ENCODE measurements at regions of chr11 and their contacts with region 1.

Region 1: DNA sequence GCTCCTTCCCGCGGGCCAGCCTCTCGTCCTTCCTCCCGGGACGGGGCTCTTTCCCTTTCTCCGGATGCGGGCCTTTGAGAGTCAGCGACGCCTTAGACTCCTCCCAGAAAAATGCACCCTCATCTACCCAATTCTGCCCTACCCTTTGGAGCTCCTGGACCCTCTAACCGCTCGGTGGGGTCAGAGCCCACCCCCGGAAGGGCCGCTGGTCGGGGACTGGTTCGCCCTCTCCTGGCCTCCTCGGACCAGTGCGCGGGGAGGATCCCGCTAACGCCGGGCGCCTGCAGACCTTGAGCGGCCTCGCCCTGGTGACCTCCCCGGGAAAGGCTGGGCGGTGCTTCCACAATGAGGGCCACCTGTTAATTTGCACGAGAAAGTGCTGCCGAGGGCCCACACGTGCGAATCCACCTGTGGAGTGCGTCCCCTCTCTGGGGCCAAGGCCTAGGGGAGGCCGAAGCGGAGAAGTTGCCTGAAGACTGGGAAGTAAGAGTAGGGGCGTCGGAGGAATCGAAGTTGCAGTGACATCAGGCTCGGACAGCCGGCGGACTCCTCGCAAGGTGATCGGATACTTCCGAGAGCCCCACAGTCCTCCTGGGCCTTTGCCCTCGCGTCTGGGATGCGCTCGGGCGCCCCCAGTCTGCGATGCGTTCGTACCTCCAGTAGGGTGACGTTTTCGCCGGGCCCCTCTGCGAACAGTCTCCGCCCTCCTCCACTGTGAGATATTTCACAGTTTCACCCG is 61.5 kb downstream of the ENDOD1 start:
- DNase-seq: peak; percentile 90
- H3K4me3 ChIP-seq: peak overlapping the region; percentile 46 to 52 (median 50)
- H3K27ac ChIP-seq: peak overlapping the region; percentile 89
- H3K4me1 ChIP-seq: peaks cover 64% of the 10 kb centered on the region
- H3K27me3 ChIP-seq: no peaks in the 10 kb centered on the region
- CTCF ChIP-seq: peak; percentile 78 to 84

Region 2: DNA sequence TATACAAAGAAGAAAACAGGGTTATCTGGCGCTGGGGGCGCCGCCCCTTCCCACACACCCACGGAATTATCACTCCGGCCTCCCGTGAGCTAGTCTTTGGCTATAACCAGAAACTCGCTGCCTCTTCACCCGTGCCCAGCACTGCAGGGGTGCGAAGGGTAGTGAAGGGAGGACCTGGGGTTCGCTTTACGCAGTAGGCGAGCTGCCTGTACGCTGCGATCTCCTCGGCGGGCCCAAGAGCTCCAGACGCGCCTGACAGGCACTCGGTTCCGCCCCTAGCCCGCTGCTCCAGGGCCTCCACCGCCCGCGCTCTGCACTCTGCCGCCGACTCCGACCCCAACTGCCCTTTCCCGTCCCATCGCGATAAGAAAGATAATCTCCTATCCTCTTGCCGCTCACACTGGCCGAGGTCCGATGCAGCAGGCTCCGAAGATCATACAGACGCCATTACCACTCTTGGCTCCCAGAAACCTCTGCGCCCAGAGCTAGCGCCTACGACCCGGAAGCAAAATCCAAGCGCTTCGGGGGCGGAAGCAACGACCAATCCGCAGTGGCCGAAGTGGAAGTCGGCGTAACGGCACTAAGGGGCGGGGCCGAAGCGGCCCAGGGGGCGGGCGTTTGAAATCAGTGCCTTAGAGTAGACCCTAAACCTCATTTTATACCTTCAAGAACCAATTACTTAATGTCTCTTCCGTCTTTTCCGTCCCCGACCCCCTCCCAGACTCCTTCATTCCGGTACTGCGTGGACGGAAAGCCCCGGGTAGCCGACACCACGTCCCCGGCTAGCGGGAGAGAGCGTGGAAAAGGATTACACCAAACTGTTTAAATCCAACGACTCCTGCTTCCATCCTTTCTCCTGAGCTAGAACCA is 177.8 kb before region 1 on chr11 and contains the starts of genes CWC15 and KDM4D:
- CTCF ChIA-PET with region 1: no interaction called
- dilution Hi-C with region 1: no loop called
- in situ Hi-C with region 1: no loop called
- intact Hi-C with region 1: loop called (anchors 2 kb)
- DNase-seq: peak; percentile 90
- H3K4me3 ChIP-seq: peak within 1 kb of the TSS; percentile 86 to 99 (median 89)
- H3K27ac ChIP-seq: peak within 1 kb of the TSS; percentile 80
- H3K4me1 ChIP-seq: peaks cover 9% of the 10 kb centered on the region
- H3K27me3 ChIP-seq: no peaks in the 10 kb centered on the region
- CTCF ChIP-seq: no peak
- total RNA-seq, gene CWC15: 27.5 to 46.5 TPM
- total RNA-seq, gene KDM4D: 1.0 TPM

Region 3: GRCh38 chr11:95089620-95090542 is 61.2 kb before region 1 on chr11 and contains the start of gene ENDOD1:
- CTCF ChIA-PET with region 1: interaction called, 3 read pairs
- dilution Hi-C with region 1: no loop called
- in situ Hi-C with region 1: loop called in 1 of 2 experiments (anchors 10 kb)
- intact Hi-C with region 1: loop called (anchors 1 kb)
- DNase-seq: peak; percentile 83
- H3K4me3 ChIP-seq: peak within 1 kb of the TSS; percentile 75 to 87 (median 80)
- H3K27ac ChIP-seq: peak within 1 kb of the TSS; percentile 69
- H3K4me1 ChIP-seq: peaks cover 48% of the 10 kb centered on the region
- H3K27me3 ChIP-seq: no peaks in the 10 kb centered on the region
- CTCF ChIP-seq: peak in 1 of 2 donors; percentile 8
- total RNA-seq, gene ENDOD1: 47.9 to 206 TPM

Region 4: GRCh38 chr11:95231127-95231880 is 80.2 kb after region 1 on chr11 and contains the start of gene SESN3:
- CTCF ChIA-PET with region 1: interaction called, 3 read pairs
- dilution Hi-C with region 1: no loop called
- in situ Hi-C with region 1: no loop called
- intact Hi-C with region 1: loop called (anchors 2 kb)
- DNase-seq: peak; percentile 100
- H3K4me3 ChIP-seq: peak within 1 kb of the TSS; percentile 73 to 93 (median 92)
- H3K27ac ChIP-seq: peak within 1 kb of the TSS; percentile 64
- H3K4me1 ChIP-seq: peaks cover 20% of the 10 kb centered on the region
- H3K27me3 ChIP-seq: no peaks in the 10 kb centered on the region
- CTCF ChIP-seq: peak in 1 of 2 donors; percentile 30
- total RNA-seq, gene SESN3: 36.5 to 184 TPM

Region 5: GRCh38 chr11:95715777-95716241 is 564.7 kb after region 1 on chr11:
- CTCF ChIA-PET with region 1: no interaction called
- dilution Hi-C with region 1: loop called (anchors 5 kb)
- in situ Hi-C with region 1: no loop called
- intact Hi-C with region 1: no loop called
- DNase-seq: peak; percentile 99
- H3K4me3 ChIP-seq: no peak overlapping the region
- H3K27ac ChIP-seq: peak overlapping the region; percentile 79
- H3K4me1 ChIP-seq: peaks cover 13% of the 10 kb centered on the region
- H3K27me3 ChIP-seq: no peaks in the 10 kb centered on the region
- CTCF ChIP-seq: no peak

Region 6: DNA sequence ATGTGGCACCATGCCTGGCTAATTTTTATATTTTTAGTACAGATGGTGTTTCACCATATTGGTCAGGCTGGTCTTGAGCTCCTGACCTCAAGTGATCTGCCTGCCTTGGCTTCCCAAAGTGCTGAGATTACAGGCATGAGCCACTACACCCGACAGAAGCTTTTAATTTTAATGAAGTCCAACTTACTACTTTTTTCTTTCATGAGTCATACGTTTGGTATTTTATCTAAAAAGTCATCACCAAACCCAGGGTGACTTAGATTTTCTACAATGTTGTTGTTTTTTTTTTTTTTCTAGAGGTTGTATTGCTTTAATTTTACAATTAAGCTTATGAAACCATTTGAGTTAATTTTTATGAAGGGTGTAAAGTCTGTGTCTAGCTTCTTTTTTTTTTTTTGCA is 1273.6 kb after region 1 on chr11:
- CTCF ChIA-PET with region 1: interaction called, 3 read pairs
- dilution Hi-C with region 1: no loop called
- in situ Hi-C with region 1: loop called in 1 of 2 experiments (anchors 10 kb)
- intact Hi-C with region 1: loop called (anchors 2 kb)
- DNase-seq: no peak
- H3K4me3 ChIP-seq: no peak overlapping the region
- H3K27ac ChIP-seq: no peak overlapping the region
- H3K4me1 ChIP-seq: peaks cover 3% of the 10 kb centered on the region
- H3K27me3 ChIP-seq: no peaks in the 10 kb centered on the region
- CTCF ChIP-seq: no peak

Measured in mammary epithelial cell (primary cell).